ENCODE measurements at regions of chr3 and their contacts with region 1.

Region 1: GRCh38 chr3:149480325-149481017 is 6.0 kb downstream of the TM4SF4 start:
- DNase-seq: peak; percentile 9
- H3K4me3 ChIP-seq: no peak overlapping the region
- H3K27ac ChIP-seq: peak overlapping the region; percentile 43 to 75 (median 66)
- H3K4me1 ChIP-seq: peaks cover 4 to 48% (median 6%) of the 10 kb centered on the region in 3 donors
- H3K27me3 ChIP-seq: no peaks in the 10 kb centered on the region
- CTCF ChIP-seq: peak in 5 of 6 experiments; percentile 60 to 83 (median 74)
- POLR2A ChIP-seq: no peak

Region 2: GRCh38 chr3:149366941-149367840 is 113.3 kb before region 1 on chr3:
- intact Hi-C with region 1: loop called (anchors 10 kb)
- DNase-seq: no peak
- H3K4me3 ChIP-seq: no peak overlapping the region
- H3K27ac ChIP-seq: peak overlapping the region; percentile 52 to 96 (median 83)
- H3K4me1 ChIP-seq: peaks cover 11 to 85% (median 47%) of the 10 kb centered on the region in 3 donors
- H3K27me3 ChIP-seq: no peaks in the 10 kb centered on the region
- CTCF ChIP-seq: no peak
- POLR2A ChIP-seq: no peak

Region 3: DNA sequence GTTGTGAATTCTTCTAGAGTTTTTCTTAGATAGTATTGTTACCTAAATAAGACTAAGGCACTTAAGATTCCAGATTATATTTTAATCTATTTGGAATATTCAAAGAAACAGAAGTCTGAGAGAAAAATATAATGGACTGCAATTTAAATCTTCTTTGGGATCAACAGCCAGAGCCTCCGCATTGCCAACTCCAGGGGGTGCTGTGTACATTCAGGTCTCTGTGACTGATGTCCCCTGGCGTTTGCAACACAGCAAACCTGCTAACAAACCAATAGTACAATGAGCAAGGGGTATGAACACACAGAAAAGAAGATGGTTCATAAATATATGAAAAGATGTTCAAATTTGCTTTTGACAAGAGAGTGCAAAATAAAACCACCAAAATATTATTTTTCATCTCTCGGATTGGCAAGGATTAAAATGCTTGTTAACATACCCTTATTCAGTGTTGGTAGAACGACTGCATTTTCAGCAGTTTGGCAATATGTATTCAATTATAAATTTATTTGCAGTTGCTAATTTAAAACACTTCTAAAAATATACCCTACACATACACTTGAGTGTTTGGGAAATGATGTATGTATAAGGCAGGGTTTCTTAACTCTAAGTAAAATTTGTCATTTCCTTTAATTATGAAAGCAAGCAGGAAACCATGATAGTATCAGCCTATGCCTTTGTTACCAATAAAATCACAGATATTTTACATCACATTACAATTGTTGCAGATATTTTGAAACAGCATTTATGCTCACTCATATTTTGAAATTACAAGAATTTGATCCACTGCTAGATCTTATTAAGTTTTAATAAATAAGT is 86.9 kb before region 1 on chr3:
- intact Hi-C with region 1: loop called (anchors 5 kb)
- DNase-seq: no peak
- H3K4me3 ChIP-seq: no peak overlapping the region
- H3K27ac ChIP-seq: peak overlapping the region in 2 of 4 donors; percentile 22 to 42
- H3K4me1 ChIP-seq: peaks cover 0 to 64% (median 15%) of the 10 kb centered on the region in 3 donors
- H3K27me3 ChIP-seq: no peaks in the 10 kb centered on the region
- CTCF ChIP-seq: peak in 5 of 6 experiments; percentile 72 to 90 (median 78)
- POLR2A ChIP-seq: no peak

Region 4: DNA sequence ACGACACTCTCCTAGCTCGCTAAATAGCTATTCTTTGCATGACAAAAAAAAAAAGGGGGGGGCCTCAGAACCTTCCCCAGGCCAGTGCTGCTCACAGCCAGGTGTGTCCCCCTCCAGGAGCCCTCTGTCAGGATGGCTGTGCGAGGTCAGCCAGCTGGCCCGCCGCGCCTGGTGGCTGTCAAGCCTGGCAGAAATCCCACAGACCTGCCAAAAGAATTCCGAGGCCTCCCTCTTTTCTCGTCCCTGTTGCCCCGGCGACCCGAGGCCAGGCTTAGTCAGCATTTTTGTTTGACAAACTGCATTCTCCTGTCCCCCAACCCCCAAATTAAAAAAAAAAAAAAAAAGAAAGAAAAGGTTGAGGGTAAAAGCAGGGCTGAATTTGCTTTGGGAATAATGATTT is 56.0 kb after region 1 on chr3:
- intact Hi-C with region 1: no loop called
- DNase-seq: no peak
- H3K4me3 ChIP-seq: no peak overlapping the region
- H3K27ac ChIP-seq: peak overlapping the region; percentile 30 to 74 (median 56)
- H3K4me1 ChIP-seq: peaks cover 10 to 83% (median 36%) of the 10 kb centered on the region in 3 donors
- H3K27me3 ChIP-seq: no peaks in the 10 kb centered on the region
- CTCF ChIP-seq: no peak
- POLR2A ChIP-seq: no peak

Region 5: DNA sequence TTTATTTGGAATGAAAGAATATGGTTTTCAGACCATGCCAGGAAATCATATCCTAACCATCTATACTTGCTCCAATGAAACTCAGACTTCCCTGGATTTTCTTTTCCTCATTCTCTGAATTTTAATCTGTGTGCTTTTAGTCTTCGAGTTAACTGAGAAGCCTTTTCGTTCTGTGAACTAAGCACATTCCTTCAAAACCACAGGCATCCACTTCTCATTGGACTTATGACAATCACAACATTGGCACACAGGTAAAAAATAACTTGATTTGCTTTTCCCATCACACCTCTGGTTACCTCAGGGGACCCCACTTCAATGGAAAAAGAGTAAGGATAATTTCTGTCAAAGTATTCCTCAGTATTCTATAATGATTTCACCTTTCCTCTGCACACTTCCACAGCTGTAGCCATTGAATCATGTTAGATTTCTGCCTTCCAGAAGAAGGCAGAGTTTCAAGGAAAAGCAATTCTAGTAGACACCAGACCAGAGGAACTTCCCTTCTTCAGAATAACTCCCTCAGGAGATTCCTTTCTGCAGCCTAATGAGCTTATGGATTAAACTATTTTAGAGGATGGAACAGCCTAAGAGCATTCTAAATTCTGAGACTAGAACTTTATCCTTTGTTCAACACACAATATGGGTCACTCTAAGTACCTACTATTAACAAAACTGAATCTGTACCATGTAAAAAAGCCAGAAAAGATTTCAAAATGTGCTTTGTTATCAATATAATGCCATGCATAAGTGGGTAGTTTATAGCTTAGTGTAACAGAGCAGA is 255.9 kb after region 1 on chr3:
- intact Hi-C with region 1: no loop called
- DNase-seq: no peak
- H3K4me3 ChIP-seq: no peak overlapping the region
- H3K27ac ChIP-seq: no peak overlapping the region
- H3K4me1 ChIP-seq: no peaks in the 10 kb centered on the region
- H3K27me3 ChIP-seq: no peaks in the 10 kb centered on the region
- CTCF ChIP-seq: no peak
- POLR2A ChIP-seq: no peak

Measured in esophagus squamous epithelium (tissue), 5 donors.